Right cardiac atrium (tissue), 5 donors: ENCODE measurements at regions of chr4 and their contacts with region 1.

Region 1: GRCh38 chr4:81069706-81070331 is 39.3 kb downstream of the BMP3 start:
- DNase-seq: peak in 2 of 3 donors; percentile 21 to 64
- ATAC-seq: peak; percentile 83 to 86
- H3K4me3 ChIP-seq: no peak overlapping the region
- H3K27ac ChIP-seq: no peak overlapping the region
- H3K4me1 ChIP-seq: no peaks in the 10 kb centered on the region
- H3K27me3 ChIP-seq: no peaks in the 10 kb centered on the region

Region 2: GRCh38 chr4:81272671-81273070 is 202.9 kb after region 1 on chr4:
- intact Hi-C with region 1: no loop called
- DNase-seq: no peak
- ATAC-seq: no peak
- H3K4me3 ChIP-seq: no peak overlapping the region
- H3K27ac ChIP-seq: no peak overlapping the region
- H3K4me1 ChIP-seq: no peaks in the 10 kb centered on the region
- H3K27me3 ChIP-seq: no peaks in the 10 kb centered on the region

Region 3: GRCh38 chr4:81351654-81352445 is 282.0 kb after region 1 on chr4:
- intact Hi-C with region 1: loop called (anchors 2 to 10 kb)
- DNase-seq: peak; percentile 61 to 81 (median 76)
- ATAC-seq: peak; percentile 76 to 81
- H3K4me3 ChIP-seq: no peak overlapping the region
- H3K27ac ChIP-seq: no peak overlapping the region
- H3K4me1 ChIP-seq: no peaks in the 10 kb centered on the region
- H3K27me3 ChIP-seq: no peaks in the 10 kb centered on the region